ENCODE measurements at regions of chr9 and their contacts with region 1.

Region 1: GRCh38 chr9:105842023-105842644 is 147.8 kb downstream of the TMEM38B start:
- DNase-seq: no peak
- H3K4me3 Mint-ChIP-seq: no peak overlapping the region
- H3K27ac Mint-ChIP-seq: no peak overlapping the region
- H3K4me1 Mint-ChIP-seq: no peaks in the 10 kb centered on the region
- H3K27me3 Mint-ChIP-seq: peaks cover 2% of the 10 kb centered on the region

Region 2: GRCh38 chr9:105243015-105243686 is 599.0 kb before region 1 on chr9:
- intact Hi-C with region 1: no loop called
- DNase-seq: no peak
- H3K4me3 Mint-ChIP-seq: no peak overlapping the region
- H3K27ac Mint-ChIP-seq: no peak overlapping the region
- H3K4me1 Mint-ChIP-seq: peaks cover 9% of the 10 kb centered on the region
- H3K27me3 Mint-ChIP-seq: peaks cover 65% of the 10 kb centered on the region

Region 3: GRCh38 chr9:105881654-105882349 is 39.7 kb after region 1 on chr9:
- intact Hi-C with region 1: loop called (anchors 1 kb)
- DNase-seq: peak; percentile 51
- H3K4me3 Mint-ChIP-seq: no peak overlapping the region
- H3K27ac Mint-ChIP-seq: no peak overlapping the region
- H3K4me1 Mint-ChIP-seq: peaks cover 24% of the 10 kb centered on the region
- H3K27me3 Mint-ChIP-seq: peaks cover 30% of the 10 kb centered on the region

Region 4: GRCh38 chr9:106058460-106058859 is 216.3 kb after region 1 on chr9:
- intact Hi-C with region 1: no loop called
- DNase-seq: no peak
- H3K4me3 Mint-ChIP-seq: no peak overlapping the region
- H3K27ac Mint-ChIP-seq: no peak overlapping the region
- H3K4me1 Mint-ChIP-seq: no peaks in the 10 kb centered on the region
- H3K27me3 Mint-ChIP-seq: no peaks in the 10 kb centered on the region